T-cell (primary cell): ENCODE measurements at regions of chr6 and their contacts with region 1.

Region 1: GRCh38 chr6:25537349-25538018 is 114.5 kb upstream of the SCGN start:
- DNase-seq: no peak
- ATAC-seq: no peak
- H3K4me3 ChIP-seq: no peak overlapping the region
- H3K4me3 Mint-ChIP-seq: no peak overlapping the region
- H3K27ac ChIP-seq: no peak overlapping the region
- H3K27ac Mint-ChIP-seq: no peak overlapping the region
- H3K4me1 ChIP-seq: no peaks in the 10 kb centered on the region
- H3K4me1 Mint-ChIP-seq: no peaks in the 10 kb centered on the region
- H3K27me3 ChIP-seq: no peaks in the 10 kb centered on the region
- H3K27me3 Mint-ChIP-seq: no peaks in the 10 kb centered on the region

Region 2: GRCh38 chr6:25309886-25310285 is 227.6 kb before region 1 on chr6:
- CTCF ChIA-PET with region 1: no interaction called
- POLR2A ChIA-PET with region 1: interaction called in 1 of 2 experiments, 15 read pairs
- DNase-seq: no peak
- ATAC-seq: no peak
- H3K4me3 ChIP-seq: no peak overlapping the region
- H3K4me3 Mint-ChIP-seq: no peak overlapping the region
- H3K27ac ChIP-seq: no peak overlapping the region
- H3K27ac Mint-ChIP-seq: no peak overlapping the region
- H3K4me1 ChIP-seq: no peaks in the 10 kb centered on the region
- H3K4me1 Mint-ChIP-seq: peaks cover 14 to 26% (median 24%) of the 10 kb centered on the region in 3 donors
- H3K27me3 ChIP-seq: no peaks in the 10 kb centered on the region
- H3K27me3 Mint-ChIP-seq: no peaks in the 10 kb centered on the region